ENCODE measurements at regions of chr6 and their contacts with region 1.

Region 1: DNA sequence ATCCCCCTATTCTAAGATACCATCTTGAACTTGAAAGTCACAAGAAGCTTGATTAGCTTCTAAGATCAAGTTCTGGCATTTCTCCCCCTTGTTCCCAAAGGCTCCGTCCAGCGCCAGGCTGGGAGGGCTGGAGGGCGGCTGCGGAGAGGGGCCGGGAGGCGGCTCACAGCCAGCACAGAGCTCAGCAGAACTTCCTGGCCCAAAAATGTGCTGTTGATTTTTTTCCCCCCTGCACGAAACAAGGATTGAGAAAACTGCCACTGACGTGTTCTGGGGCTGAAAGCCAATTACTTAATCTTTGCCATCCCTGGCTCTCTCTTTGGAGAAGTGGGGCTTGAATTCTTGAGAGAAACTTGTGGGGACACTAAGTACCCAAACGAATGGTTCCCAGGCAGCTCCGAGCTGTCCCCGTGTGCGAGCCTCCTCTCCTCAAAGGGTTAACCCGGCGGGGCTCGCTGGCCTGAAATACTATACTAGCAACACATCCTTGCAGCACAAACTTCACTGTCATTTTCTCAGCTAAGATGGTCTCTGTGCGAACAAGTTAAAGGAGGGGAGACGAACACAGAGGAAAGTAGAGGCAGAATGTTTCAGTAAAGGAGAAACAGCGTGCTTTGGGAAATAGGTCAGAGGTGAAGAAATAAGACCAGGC is 452 bp downstream of the TRAF3IP2 start:
- DNase-seq: peak; percentile 28
- H3K4me3 Mint-ChIP-seq: peak overlapping the region; percentile 82
- H3K27ac Mint-ChIP-seq: peak overlapping the region; percentile 92
- H3K4me1 Mint-ChIP-seq: peaks cover 47% of the 10 kb centered on the region
- H3K27me3 Mint-ChIP-seq: no peaks in the 10 kb centered on the region

Region 2: DNA sequence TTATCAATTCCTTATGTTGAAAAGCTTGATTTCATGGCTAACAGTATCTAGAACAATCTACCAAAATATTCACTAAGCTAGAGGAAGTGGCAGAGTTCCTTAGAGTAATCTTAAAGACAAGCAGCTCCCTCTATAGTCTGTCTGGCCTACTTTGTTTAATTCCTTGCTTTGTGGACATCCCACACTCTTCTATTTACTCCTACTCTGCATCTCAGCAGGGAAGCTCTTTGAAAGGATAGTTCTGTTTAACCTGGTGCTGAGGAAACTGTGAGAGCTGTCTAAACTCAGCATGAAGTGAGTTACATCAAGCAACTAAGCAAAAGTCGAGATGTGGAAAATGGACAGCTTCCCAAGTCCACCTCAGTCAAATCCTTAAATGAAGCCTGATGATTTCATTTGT is 126.5 kb before region 1 on chr6:
- CTCF ChIA-PET with region 1: interaction called, 5 read pairs
- POLR2A ChIA-PET with region 1: interaction called, 80 read pairs
- DNase-seq: no peak
- H3K4me3 Mint-ChIP-seq: no peak overlapping the region
- H3K27ac Mint-ChIP-seq: no peak overlapping the region
- H3K4me1 Mint-ChIP-seq: peaks cover 35% of the 10 kb centered on the region
- H3K27me3 Mint-ChIP-seq: no peaks in the 10 kb centered on the region

Region 3: DNA sequence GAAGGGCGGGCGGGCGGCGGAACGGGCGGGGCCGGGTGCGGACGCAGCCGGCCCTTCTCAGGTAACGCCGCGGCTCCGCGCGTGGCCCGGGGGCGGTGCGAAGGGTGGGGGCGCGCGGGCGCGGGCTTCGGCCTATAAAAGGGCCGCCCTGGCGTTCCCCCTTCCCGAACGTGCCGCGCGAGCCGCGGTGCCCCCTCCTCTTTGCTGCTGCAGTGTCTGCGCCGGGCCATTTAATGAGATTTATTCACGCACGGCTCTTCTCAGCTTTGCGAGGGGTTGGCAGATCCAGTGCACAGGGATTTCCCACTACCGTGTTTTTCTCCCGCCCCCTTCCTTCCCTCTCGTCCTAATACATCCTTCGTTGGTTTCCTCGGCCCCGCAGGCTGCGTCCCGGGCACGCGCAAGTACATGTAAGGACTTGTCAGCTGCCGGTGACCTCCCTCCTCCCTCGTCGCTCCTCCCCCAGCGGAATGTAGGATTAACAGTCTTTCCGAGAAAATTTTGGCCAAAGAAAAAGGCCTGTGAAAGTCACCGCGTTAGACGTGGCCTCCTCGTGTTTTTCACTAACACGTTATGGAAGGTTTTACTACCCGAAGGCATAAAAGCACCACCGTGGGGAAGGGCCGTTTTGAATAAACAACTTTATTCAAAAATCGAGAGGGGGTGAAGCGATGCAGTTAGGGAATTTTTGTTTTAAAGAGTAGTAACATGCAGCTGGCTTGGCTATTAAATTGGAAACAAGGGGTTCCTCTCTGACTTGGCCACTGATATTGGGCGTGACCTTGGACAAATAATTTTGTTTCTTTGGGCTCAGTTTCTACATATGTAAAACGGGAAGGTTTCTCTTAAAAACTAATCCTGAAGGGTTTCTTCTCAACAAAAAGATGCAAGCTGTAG is 121.2 kb before region 1 on chr6:
- CTCF ChIA-PET with region 1: interaction called, 5 read pairs
- POLR2A ChIA-PET with region 1: interaction called, 80 read pairs
- DNase-seq: peak; percentile 88
- H3K4me3 Mint-ChIP-seq: peak overlapping the region; percentile 95
- H3K27ac Mint-ChIP-seq: peak overlapping the region; percentile 96
- H3K4me1 Mint-ChIP-seq: peaks cover 59% of the 10 kb centered on the region
- H3K27me3 Mint-ChIP-seq: no peaks in the 10 kb centered on the region

Region 4: DNA sequence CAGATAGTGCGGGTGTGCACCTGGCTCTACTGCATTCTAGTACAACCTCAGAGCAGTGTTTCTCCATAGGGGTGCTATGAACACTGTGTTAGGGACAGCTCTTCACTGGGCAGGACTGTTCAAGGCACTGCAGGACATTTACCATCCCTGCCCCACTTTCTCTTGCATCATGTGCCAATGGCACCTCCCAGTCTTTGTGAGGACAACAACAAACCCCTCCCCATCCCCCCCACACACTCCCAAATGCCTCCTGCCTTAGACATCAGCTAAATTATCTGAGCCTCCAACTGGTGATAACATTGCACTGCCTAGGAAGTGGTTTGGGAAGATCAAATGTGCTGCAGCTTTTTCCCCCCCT is 169.1 kb after region 1 on chr6:
- CTCF ChIA-PET with region 1: no interaction called
- POLR2A ChIA-PET with region 1: no interaction called
- DNase-seq: no peak
- H3K4me3 Mint-ChIP-seq: no peak overlapping the region
- H3K27ac Mint-ChIP-seq: no peak overlapping the region
- H3K4me1 Mint-ChIP-seq: peaks cover 87% of the 10 kb centered on the region
- H3K27me3 Mint-ChIP-seq: no peaks in the 10 kb centered on the region